Tibial artery (tissue), 4 donors: ENCODE measurements at regions of chr18 and their contacts with region 1.

Region 1: DNA sequence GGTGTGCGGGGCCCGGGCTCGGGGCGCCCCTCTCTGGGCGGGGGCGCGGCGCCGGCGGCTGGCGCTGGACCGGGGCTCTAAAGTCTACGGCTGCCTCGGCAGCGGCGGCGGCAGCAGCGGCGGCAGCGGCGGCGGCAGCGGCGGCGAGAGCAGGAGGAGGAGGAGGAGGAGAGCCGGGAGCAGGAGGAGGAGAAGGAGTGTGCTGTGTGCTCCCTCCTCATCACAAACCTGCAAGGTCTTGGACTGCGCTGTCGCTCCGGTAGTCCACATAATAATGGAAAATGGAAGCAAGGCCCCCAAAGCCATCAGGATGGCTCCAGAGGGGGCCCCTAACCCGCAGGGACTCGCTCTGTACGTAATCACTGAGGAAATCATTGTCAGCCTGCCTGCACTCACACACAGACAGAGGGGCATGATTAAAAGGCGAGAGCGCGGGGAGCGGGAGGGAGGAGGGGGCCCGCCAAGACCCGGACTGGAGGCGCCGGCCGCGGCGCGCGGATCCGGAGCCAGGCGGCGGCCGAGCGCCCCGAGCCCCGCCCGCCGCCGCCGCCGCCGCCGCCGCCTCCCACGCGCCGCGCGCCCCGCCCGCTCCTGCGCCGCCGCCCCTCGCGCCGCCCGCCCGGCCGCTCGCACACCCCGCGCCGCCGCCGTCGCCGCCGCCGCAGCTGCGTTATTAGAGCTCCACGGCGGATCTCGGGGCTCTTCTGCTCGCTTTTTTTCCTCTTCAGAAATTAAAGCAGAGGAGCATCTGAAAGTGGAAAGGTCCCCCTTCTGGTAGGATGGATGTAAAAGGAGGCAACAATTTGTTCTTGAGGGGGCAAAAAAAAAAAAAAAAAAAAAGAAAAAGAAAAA is at the start of gene ZNF521:
- DNase-seq: peak; percentile 90 to 92
- H3K4me3 ChIP-seq: peak within 1 kb of the TSS; percentile 67 to 76
- H3K27ac ChIP-seq: peak within 1 kb of the TSS; percentile 77 to 81
- H3K4me1 ChIP-seq: peaks cover 0 to 33% (median 5%) of the 10 kb centered on the region in 4 donors
- H3K27me3 ChIP-seq: peaks cover 0 to 19% of the 10 kb centered on the region in 2 donors
- CTCF ChIP-seq: no peak

Region 2: DNA sequence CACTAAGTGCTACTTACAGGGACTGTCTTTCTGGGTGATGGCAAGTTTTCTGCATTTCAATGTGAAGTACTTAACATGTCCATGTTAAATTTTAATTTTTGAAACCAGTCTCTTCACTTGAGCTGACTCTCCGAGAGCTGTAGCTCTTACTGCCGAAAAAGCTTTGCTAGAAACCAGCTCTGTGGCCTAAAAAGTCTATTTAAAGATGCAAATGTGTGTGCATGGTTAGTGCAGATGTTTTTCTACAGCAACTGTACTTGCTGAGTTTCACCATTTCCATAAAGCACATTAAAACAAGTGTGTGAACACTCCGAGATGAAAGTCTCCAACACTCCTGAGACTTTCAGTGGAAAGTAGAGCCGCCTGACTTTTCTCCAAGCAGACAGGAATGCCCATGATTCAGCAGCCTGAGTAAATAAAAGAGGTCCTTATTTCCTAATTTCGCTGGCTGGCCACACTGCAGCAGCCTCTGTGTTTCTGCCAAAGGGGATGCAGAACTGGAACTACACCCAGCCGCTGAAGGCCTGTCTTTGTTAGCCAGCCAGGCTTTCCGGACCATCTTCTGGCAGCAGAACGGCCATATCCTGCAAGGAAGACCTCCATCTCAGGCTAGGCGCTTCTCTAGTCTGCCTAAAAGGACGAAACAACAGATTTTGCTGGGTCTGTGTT is 121.2 kb before region 1 on chr18:
- intact Hi-C with region 1: loop called (anchors 5 kb)
- DNase-seq: peak; percentile 85 to 90
- H3K4me3 ChIP-seq: peak overlapping the region; percentile 18 to 24
- H3K27ac ChIP-seq: peak overlapping the region; percentile 48 to 59
- H3K4me1 ChIP-seq: peaks cover 0 to 25% (median 15%) of the 10 kb centered on the region in 4 donors
- H3K27me3 ChIP-seq: no peaks in the 10 kb centered on the region
- CTCF ChIP-seq: no peak

Region 3: DNA sequence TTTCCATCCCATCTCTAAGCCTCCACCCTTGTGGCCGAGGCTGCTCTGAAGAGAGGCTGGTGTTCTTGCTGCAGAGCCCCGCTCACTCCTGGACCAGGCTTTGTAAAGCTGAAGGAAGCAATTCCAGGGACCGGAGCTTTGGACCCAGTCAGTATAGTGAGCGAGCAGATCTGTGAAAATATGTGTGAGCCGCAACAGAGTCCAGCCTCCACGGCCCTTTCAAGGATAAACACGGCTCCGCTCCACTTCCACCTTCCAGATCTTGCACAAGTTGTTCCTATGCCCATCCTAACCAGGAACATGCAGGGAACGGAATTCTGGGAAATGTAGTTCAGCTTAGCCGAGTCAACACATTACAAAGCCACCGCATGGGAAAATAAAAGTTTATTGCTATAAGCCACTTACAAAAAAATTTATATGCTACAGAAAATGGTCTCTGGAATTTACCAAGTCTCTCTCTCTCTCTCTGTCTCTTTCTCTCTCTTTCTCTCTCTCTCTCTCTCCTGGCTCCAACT is 151.6 kb after region 1 on chr18:
- intact Hi-C with region 1: loop called (anchors 10 kb)
- DNase-seq: peak; percentile 71 to 74
- H3K4me3 ChIP-seq: peak overlapping the region; percentile 38 to 49
- H3K27ac ChIP-seq: peak overlapping the region; percentile 42 to 45
- H3K4me1 ChIP-seq: peaks cover 0 to 7% (median 3%) of the 10 kb centered on the region in 4 donors
- H3K27me3 ChIP-seq: no peaks in the 10 kb centered on the region
- CTCF ChIP-seq: no peak